HEK293 (cell line): ENCODE measurements at regions of chr10 and their contacts with region 1.

Region 1: DNA sequence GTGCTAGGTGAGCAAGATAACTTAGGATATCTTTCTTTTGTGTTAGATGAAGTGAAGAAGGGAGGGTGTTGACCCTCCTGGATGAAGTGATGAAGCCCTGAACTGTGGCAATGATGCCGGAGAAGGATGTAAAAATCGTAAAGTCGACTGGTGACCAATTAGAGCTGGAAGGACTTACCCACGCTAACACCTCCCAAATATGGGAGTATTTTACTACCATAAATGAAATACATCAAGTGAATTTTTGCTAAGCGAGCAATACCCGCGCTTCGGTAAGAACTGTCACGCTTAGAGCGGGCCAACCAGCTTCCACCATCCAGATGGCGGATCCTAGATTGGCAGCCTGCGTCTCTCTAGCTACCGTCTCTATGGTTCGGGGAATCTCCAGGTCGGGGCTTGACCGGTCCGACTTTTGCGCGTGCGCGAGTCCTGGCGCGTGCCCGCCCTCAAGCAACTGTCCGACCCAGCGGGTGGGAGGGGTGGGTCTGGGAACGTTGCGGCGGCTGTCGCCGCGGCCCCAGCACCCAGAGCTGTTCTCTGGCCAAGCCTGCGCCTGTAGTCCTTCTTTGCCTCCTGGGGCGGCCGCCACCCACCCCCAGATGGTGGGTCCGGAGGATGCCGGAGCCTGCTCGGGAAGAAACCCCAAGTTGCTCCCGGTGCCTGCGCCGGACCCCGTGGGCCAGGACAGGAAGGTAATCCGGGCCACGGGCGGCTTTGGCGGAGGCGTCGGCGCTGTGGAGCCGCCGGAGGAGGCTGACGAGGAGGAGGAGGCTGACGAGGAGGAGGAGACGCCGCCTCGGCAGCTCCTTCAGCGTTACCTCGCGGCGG is at the start of gene TBC1D12:
- H3K4me3 ChIP-seq: peak within 1 kb of the TSS; percentile 80
- H3K27ac ChIP-seq: peak within 1 kb of the TSS; percentile 91
- H3K4me1 ChIP-seq: peaks cover 2% of the 10 kb centered on the region
- CTCF ChIP-seq: peak; percentile 55; the same call in 1 of the 2 replicates

Region 2: DNA sequence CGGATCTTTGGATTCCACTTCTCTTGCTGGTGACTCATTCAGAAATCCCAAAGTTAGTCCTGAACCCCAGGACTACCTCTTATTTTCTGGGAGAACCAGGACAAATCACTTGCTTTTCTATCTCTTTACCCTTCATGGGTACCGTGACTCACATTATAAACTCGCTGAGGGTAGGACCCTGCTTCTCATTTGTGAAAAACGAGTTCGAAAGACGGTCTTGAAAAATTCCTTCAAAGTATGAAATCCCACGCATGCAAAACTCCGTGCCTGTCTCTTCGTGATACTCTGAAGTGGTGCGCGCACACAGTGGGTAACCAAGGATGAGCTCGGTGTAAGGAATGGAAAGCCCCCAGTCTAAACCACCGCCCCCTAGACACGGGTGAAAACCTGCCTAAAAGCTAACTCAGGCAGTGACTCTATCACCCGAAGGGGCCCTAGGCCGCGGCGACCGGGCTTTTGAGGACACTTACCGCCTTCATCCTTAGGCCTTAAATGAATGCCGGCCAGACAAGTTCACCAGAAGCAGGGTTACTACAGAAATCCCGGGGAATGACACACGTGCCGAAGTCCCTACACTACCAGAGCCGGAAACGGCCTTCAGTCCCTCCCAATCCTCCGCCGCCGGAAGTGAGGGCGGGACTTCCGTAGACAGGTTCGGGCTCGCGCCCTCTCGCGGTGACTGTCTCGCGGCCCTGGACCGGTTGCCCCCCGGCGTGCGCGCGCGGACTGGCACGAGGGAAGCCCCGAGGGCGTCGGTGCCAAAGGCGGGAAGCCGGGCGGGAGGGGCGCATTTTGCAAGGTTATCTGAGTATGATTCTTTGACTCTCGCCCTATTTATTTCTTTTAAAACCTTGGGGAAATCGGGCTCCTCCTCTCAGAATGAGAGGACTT is 39.6 kb before region 1 on chr10 and contains the start of gene NOC3L:
- CTCF ChIA-PET with region 1: interaction called, 6 read pairs
- POLR2A ChIA-PET with region 1: interaction called, 11 read pairs
- H3K4me3 ChIP-seq: peak within 1 kb of the TSS; percentile 80
- H3K27ac ChIP-seq: peak within 1 kb of the TSS; percentile 59
- H3K4me1 ChIP-seq: peaks cover 11% of the 10 kb centered on the region
- CTCF ChIP-seq: peak; percentile 100

Region 3: GRCh38 chr10:94412449-94412848 is 10.2 kb after region 1 on chr10:
- CTCF ChIA-PET with region 1: interaction called, 5 read pairs
- POLR2A ChIA-PET with region 1: interaction called, 21 read pairs
- H3K4me3 ChIP-seq: no peak overlapping the region
- H3K27ac ChIP-seq: no peak overlapping the region
- H3K4me1 ChIP-seq: peaks cover 39% of the 10 kb centered on the region
- CTCF ChIP-seq: no peak